Activated T-helper 1 cell treated with anti-CD3 and anti-CD28 coated beads, Interleukin-12 subunit alpha, Interleukin-12 subunit beta, Interleukin-2, Interleukin-4 antibody, amounts not matched to agents 30 ng/mL and 10 ng/mL and 1 ng/mL, durations not matched to agents 14 hours and 24 hours and 36 hours (primary cell): ENCODE measurements at regions of chr2 and their contacts with region 1.

Region 1: DNA sequence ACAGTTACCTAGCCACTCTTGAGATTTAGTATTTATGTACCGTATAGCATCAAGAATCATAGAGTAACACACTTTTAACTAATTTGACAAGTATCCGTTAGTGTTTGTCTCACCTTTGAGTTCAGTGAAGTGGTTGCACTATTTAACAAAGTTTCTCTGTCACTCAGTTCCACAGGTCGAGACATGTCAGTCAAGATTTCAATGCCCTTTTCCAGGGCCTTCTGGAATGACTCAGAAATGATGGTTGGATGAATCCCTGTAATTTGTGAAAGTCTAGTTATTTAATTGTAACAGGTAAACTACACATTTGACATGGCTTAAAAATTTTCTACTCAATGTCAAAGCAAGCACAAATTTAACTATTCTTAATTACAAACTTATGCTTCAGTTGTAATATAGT is 9.7 kb downstream of the CCT4 start:
- DNase-seq: no peak
- H3K4me3 Mint-ChIP-seq: no peak overlapping the region
- H3K27ac Mint-ChIP-seq: no peak overlapping the region
- H3K4me1 Mint-ChIP-seq: no peaks in the 10 kb centered on the region
- H3K27me3 Mint-ChIP-seq: no peaks in the 10 kb centered on the region

Region 2: DNA sequence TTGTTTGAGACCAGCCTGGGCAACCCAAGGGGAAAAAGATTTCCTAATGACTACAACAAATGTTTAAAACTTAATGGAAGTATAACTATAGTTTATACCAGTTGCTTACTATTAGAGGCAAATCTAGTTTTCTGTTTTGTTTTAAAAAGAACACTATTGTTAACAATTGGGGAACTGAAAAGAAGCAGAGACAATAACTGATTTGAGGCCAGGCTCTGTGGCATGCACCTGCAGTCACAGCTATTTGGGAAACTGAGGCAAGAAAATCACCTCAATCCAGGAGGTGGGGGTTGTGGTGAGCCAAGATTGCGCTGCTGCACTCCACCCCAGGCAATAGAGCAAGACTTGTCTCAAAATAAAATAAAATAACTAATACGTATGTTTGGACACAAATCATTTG is 379.7 kb before region 1 on chr2:
- intact Hi-C with region 1: loop called (anchors 5 kb)
- DNase-seq: no peak
- H3K4me3 Mint-ChIP-seq: no peak overlapping the region
- H3K27ac Mint-ChIP-seq: no peak overlapping the region
- H3K4me1 Mint-ChIP-seq: peaks cover 5% of the 10 kb centered on the region
- H3K27me3 Mint-ChIP-seq: no peaks in the 10 kb centered on the region

Region 3: GRCh38 chr2:61905372-61906185 is 26.8 kb after region 1 on chr2 and contains the start of gene COMMD1:
- intact Hi-C with region 1: no loop called
- DNase-seq: peak; percentile 78
- H3K4me3 Mint-ChIP-seq: peak within 1 kb of the TSS; percentile 97
- H3K27ac Mint-ChIP-seq: peak within 1 kb of the TSS; percentile 81
- H3K4me1 Mint-ChIP-seq: peaks cover 18% of the 10 kb centered on the region
- H3K27me3 Mint-ChIP-seq: no peaks in the 10 kb centered on the region
- total RNA-seq, gene COMMD1: 25.4 and 28.9 TPM in 2 replicates